ENCODE measurements at regions of chr10 and their contacts with region 1.

Region 1: DNA sequence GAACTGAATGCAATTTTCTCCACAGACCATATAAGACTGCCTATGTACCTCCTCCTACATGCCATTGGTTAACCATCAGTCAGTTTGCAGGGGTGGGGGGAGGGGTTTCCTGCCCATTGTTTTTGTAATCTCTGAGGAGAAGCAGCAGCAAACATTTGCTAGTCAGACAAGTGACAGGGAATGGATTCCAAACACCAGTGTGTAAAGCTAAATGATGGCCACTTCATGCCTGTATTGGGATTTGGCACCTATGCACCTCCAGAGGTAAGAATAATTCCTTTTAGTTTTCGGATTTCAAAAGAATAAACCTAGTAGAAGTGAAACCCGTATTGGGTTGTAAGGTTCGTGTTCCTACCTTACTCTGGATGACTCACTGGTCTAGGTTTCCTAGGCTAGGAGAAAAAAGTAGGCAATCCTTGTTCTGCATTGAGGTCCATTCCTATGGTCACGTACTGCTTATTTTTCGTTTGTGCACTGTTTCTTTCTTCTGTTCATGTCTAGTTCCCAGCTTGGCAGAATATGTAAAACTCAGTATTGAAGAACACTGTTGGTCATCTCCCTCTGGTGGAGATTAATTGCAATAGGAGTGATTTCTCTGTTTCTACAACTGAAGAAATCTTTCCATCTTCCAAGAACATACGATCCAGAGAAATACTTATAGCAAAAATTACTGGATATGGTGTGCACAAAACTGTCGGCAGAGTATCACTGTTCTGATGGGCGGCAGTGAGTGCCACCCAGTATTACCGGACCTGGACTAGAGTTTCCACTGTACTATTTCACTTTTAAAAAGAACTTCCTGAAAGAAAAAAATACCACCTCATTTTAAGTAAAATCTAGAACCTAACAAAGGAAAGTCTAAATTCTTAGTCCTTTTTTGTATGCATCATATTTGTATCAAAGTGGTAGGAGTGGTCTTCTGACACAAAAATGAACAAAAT is at the start of gene AKR1C3:
- DNase-seq: peak in 1 of 2 experiments; percentile 50
- H3K4me3 ChIP-seq: peak within 1 kb of the TSS; percentile 11
- H3K4me1 ChIP-seq: no peaks in the 10 kb centered on the region
- H3K27me3 ChIP-seq: no peaks in the 10 kb centered on the region

Region 2: DNA sequence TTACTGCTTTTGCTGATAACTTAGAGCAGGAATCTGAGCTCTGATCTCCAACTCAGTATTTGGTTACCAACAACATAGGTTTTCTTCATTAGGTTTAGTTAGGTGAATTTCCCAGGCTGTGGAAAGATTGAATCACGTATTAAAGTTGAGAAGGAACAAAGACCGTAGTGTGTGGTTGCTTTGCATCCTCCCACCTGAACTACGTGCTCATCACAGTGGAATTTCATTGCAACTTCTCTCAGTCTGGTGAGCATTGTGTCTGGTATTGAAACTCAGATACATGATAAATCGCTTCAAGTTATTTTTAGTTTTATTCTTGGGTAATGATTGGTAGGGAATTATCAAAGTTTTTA is 407.9 kb before region 1 on chr10:
- in situ Hi-C with region 1: no loop called
- DNase-seq: no peak
- H3K4me3 ChIP-seq: no peak overlapping the region
- H3K4me1 ChIP-seq: no peaks in the 10 kb centered on the region
- H3K27me3 ChIP-seq: no peaks in the 10 kb centered on the region

Region 3: GRCh38 chr10:4825851-4826665 is 268.5 kb before region 1 on chr10 and contains the start of gene AKR1E2:
- in situ Hi-C with region 1: no loop called
- DNase-seq: peak; percentile 51 to 85
- H3K4me3 ChIP-seq: peak within 1 kb of the TSS; percentile 21
- H3K4me1 ChIP-seq: peaks cover 9% of the 10 kb centered on the region; the same call in 1 of the 2 replicates
- H3K27me3 ChIP-seq: no peaks in the 10 kb centered on the region

Region 4: DNA sequence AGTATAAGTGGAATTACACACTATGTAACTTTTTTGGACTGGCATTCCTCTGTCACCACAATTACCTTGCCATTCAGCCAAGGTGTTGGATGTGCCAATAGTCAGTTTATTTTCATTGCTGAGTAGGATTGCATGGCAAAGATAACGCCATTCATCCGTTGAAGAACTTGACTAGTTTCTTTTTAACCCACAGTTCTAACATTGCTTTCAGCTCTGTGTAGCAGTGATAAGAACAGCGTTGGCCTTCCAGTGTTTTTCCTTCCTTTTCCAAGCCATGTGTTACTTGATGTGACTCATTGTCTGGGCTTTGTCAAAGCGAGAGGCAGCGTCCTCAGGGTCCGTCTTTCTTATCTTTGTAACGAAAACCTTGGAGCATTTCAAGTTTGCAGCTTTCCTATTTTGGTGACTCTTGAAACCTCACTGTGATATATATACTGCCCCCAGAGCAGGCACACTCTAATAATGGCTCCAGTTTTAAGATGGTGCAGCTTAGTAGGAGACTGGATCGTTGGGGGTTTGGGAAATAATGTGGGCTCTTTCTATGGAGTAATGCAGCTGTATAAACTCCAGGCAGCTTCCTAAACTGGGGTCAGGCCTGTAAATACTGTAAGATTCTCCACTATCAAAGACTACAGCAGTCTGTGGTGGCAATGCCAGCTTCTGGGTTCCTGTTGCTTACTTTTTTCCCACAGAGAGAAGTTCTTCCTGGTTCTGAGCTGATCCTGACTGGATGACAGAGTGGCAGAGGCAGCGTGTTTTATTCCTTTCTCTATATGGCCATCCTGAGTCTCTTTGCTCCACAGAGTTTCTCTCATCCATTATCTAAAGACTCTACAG is 226.8 kb before region 1 on chr10:
- in situ Hi-C with region 1: no loop called
- DNase-seq: no peak
- H3K4me3 ChIP-seq: no peak overlapping the region
- H3K4me1 ChIP-seq: no peaks in the 10 kb centered on the region; the same call in 1 of the 2 replicates
- H3K27me3 ChIP-seq: no peaks in the 10 kb centered on the region

Region 5: GRCh38 chr10:5283305-5284158 is 189.0 kb after region 1 on chr10:
- in situ Hi-C with region 1: loop called (anchors 10 kb)
- DNase-seq: peak; percentile 51 to 73
- H3K4me3 ChIP-seq: no peak overlapping the region
- H3K4me1 ChIP-seq: no peaks in the 10 kb centered on the region
- H3K27me3 ChIP-seq: no peaks in the 10 kb centered on the region